Activated CD4-positive, alpha-beta memory T cell treated with anti-CD3 and anti-CD28 coated beads, Interleukin-2, amount 10 ng/mL, durations not matched to agents 7 days and 5 days (primary cell): ENCODE measurements at regions of chr11 and their contacts with region 1.

Region 1: GRCh38 chr11:83156150-83156995 is 558 bp upstream of the PCF11 start:
- DNase-seq: peak; percentile 99
- H3K4me3 Mint-ChIP-seq: peak overlapping the region; percentile 100
- H3K27ac Mint-ChIP-seq: peak overlapping the region; percentile 100
- H3K4me1 Mint-ChIP-seq: peaks cover 34% of the 10 kb centered on the region
- H3K27me3 Mint-ChIP-seq: no peaks in the 10 kb centered on the region

Region 2: DNA sequence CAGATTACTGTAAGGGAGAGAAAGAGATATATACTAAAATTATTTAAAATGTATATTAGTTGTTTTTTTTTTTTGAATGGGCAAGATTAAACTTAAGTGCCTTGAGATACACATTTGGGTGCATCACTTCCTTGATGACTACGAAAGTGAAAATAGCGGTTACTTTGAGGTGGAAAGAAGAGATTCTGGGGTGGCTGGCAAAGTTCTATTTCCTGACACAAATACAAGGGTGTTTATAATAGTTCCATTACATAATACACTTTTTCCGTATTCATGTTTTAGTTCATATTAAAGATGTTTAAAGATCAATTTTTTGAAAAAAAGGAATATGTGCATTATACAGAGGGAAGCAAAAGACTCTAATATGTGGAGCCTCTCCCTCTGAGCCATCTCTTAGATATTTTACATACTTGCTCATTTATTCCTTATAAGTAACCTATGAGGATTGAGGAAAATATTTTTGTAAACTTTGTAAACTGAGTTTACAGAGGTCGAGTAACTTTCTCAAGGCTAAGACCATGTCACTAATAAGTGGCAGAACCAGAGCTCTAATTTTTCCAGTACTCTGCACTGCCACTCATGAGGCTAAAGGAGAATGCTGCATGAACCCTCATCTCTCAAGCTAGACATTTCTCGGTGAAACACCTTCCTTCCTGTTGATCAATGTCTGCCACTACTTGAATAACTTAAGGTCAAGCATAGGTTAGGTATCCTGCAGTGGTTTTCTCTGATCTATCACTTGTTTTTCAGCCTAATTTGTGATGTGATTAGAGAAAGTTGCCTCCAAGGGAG is 196.2 kb before region 1 on chr11:
- CTCF ChIA-PET with region 1: interaction called, 6 read pairs
- POLR2A ChIA-PET with region 1: interaction called, 21 read pairs
- DNase-seq: peak; percentile 47
- H3K4me3 Mint-ChIP-seq: no peak overlapping the region
- H3K27ac Mint-ChIP-seq: peak overlapping the region; percentile 24
- H3K4me1 Mint-ChIP-seq: peaks cover 62% of the 10 kb centered on the region
- H3K27me3 Mint-ChIP-seq: peaks cover 17% of the 10 kb centered on the region

Region 3: DNA sequence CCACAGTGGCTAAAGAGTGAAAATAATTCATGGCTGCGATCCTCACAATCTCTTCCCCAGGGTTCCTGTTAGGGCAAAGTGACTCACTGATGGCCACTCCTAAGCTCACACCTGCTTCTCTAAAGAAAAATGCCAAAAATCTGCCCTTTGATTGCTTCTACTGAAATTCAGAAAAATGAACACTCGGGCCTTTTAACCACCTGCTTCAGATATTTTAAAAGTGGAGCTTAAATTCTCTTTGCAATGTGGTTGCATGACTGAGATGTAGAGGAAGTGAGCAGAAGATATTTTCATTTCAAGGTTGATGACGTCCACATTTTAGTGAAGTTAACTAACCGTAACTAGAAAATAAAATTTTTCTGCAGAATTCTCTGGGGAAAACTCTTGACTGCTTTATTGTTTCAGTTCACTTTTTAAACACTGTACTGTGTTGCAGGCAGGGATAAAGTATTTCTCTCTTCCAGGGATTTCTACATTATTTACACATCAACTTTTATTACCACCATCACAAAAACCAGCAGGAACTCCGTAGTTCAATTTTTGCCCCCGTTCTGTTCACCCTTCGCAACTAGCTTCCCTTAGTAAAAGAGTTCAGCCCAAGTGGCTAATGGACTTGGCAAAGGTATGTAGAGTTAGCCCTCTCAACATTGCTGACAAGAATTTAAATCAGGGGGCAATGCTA is 93.2 kb before region 1 on chr11:
- CTCF ChIA-PET with region 1: no interaction called
- POLR2A ChIA-PET with region 1: interaction called, 31 read pairs
- DNase-seq: no peak
- H3K4me3 Mint-ChIP-seq: peak overlapping the region; percentile 74
- H3K27ac Mint-ChIP-seq: peak overlapping the region; percentile 96
- H3K4me1 Mint-ChIP-seq: peaks cover 30% of the 10 kb centered on the region
- H3K27me3 Mint-ChIP-seq: no peaks in the 10 kb centered on the region

Region 4: DNA sequence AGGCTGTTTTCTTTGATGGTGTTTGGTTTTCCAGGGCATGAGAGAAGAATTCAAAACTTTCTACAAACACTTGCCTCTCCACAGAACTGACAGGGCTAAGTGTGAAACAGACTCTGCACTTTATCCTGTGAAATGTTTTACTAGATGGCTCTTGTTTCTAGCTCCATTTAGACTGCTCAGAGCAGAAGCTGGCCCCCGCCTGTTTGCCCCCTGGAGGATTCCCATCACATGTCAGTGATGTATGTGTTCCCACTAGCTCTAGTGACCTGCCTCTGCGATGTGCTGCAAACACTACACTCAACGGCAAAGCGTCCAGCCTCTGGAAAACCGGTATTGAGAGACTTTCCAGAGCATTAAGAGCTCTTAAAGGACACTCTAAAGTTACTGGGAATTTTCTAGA is 40.8 kb before region 1 on chr11:
- CTCF ChIA-PET with region 1: interaction called, 4 read pairs
- POLR2A ChIA-PET with region 1: interaction called, 48 read pairs
- DNase-seq: no peak
- H3K4me3 Mint-ChIP-seq: no peak overlapping the region
- H3K27ac Mint-ChIP-seq: no peak overlapping the region
- H3K4me1 Mint-ChIP-seq: peaks cover 30% of the 10 kb centered on the region
- H3K27me3 Mint-ChIP-seq: no peaks in the 10 kb centered on the region

Region 5: DNA sequence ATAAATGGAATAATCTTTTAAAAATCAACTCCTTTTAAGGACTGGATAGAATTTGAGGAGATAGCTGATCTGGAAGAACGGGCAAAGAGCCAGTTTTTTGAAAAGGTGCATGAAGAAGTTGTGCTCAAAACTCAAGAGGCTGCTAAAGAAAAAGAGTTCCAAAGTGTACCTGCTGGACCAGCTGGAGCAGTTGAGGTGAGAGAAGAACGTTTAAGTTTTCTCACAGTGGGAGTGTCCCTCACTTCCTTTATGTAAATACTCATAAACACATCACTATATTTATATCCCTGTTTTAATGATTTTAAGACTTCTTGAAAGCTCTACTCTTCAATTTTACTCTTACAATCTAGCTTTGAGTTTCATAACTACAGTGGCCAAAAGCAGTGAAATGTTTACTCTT is 25.4 kb after region 1 on chr11:
- CTCF ChIA-PET with region 1: no interaction called
- POLR2A ChIA-PET with region 1: interaction called, 11 read pairs
- DNase-seq: no peak
- H3K4me3 Mint-ChIP-seq: no peak overlapping the region
- H3K27ac Mint-ChIP-seq: no peak overlapping the region
- H3K4me1 Mint-ChIP-seq: peaks cover 9% of the 10 kb centered on the region
- H3K27me3 Mint-ChIP-seq: no peaks in the 10 kb centered on the region

Region 6: GRCh38 chr11:83285771-83286528 is 129.6 kb after region 1 on chr11 and contains the start of gene CCDC90B:
- CTCF ChIA-PET with region 1: interaction called, 4 read pairs
- POLR2A ChIA-PET with region 1: interaction called, 22 read pairs
- DNase-seq: peak; percentile 95
- H3K4me3 Mint-ChIP-seq: peak within 1 kb of the TSS; percentile 92
- H3K27ac Mint-ChIP-seq: peak within 1 kb of the TSS; percentile 97
- H3K4me1 Mint-ChIP-seq: peaks cover 33% of the 10 kb centered on the region
- H3K27me3 Mint-ChIP-seq: no peaks in the 10 kb centered on the region
- total RNA-seq, gene CCDC90B: 29.7 to 31.5 TPM